ENCODE measurements at regions of chr21 and their contacts with region 1.

Region 1: DNA sequence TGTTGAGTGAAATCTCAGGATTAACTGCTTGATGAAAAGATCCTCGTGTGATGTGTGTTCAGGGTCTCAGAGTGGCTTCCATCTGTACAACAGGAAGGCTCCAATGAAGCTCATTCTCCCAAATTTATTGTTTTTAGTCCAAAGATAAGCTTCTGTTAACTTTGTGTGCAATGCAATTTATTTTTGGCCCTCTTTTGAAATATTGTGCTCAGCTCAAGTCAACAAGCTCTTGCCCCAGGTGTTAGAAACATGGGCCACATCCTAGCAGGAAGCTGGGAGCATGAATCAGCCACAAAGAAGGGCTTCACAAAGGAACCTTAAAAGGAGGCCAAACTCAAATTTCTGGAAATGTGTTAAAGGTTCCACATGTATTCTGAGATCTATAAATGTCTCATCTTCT is 135.7 kb downstream of the PCP4 start:
- DNase-seq: no peak
- H3K4me3 ChIP-seq: no peak overlapping the region
- H3K27ac ChIP-seq: no peak overlapping the region
- H3K4me1 ChIP-seq: no peaks in the 10 kb centered on the region
- H3K27me3 ChIP-seq: no peaks in the 10 kb centered on the region
- CTCF ChIP-seq: no peak

Region 2: DNA sequence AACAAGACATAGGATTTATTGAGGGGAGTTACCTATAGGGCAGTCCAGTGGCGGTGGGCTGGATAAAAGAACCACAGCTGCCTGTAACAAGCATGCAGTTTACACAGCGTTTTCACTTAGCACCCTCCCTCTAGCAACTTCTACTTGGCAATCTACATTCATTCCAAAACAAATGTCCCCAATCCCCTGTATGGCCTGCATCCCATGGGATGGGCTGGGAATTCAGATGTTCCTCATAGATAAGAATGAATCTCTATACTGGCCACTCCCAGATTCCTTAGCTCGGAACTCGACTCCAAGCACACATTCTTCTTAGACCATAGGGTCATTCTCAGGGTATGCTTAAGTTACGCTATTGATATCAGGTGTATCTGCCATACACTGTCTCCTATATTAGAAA is 102.5 kb before region 1 on chr21:
- CTCF ChIA-PET with region 1: no interaction called
- POLR2A ChIA-PET with region 1: no interaction called
- intact Hi-C with region 1: no loop called
- DNase-seq: no peak
- H3K4me3 ChIP-seq: no peak overlapping the region
- H3K27ac ChIP-seq: no peak overlapping the region
- H3K4me1 ChIP-seq: no peaks in the 10 kb centered on the region
- H3K27me3 ChIP-seq: peaks cover 10% of the 10 kb centered on the region
- CTCF ChIP-seq: no peak

Region 3: DNA sequence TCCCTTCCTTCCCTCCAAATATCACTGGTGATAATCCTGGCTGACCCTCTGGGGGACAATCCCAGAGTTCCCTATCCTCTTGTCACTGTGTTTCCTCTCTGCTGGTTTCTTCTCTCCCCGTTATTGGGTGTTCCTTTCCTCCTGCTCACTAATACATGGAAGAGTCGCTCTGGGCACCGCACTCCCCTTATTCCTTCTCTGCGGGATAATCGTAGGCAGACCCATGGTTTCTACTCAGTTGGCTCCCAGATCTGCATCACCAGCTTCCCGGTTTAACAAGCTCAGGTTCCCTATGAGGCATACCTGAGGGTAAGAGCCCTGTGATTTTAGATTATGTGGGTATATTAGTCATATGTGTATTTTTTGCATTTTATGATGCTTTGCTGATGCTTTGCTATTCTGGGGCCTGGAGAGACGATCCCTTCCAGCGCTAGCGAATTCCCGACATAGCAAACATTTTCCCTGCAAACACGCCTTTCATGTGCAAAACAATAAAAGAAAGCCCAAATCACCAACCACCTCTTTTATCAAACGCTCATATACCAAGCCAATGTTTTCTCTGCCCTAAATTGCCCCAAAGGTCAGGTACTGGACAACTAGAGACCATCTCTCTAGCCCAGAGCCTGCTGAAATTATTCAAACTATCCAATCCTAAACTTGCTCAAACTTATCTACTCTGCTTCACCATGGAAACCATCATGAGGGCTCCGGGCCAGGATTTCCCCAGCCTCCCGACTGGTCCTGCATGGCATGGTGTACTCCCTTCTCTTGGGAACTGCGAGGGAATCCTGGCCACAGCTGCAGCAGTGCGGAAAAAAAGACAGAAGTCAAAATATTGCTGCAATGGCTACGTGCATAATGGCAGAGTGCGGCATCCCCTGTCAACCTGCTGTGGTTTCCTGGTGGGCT is 51.5 kb before region 1 on chr21:
- CTCF ChIA-PET with region 1: no interaction called
- POLR2A ChIA-PET with region 1: no interaction called
- intact Hi-C with region 1: loop called (anchors 10 kb)
- DNase-seq: no peak
- H3K4me3 ChIP-seq: no peak overlapping the region
- H3K27ac ChIP-seq: no peak overlapping the region
- H3K4me1 ChIP-seq: no peaks in the 10 kb centered on the region
- H3K27me3 ChIP-seq: no peaks in the 10 kb centered on the region
- CTCF ChIP-seq: no peak

Region 4: GRCh38 chr21:40338755-40339429 is 335.9 kb after region 1 on chr21:
- CTCF ChIA-PET with region 1: no interaction called
- POLR2A ChIA-PET with region 1: no interaction called
- intact Hi-C with region 1: no loop called
- DNase-seq: no peak
- H3K4me3 ChIP-seq: no peak overlapping the region
- H3K27ac ChIP-seq: no peak overlapping the region
- H3K4me1 ChIP-seq: no peaks in the 10 kb centered on the region
- H3K27me3 ChIP-seq: peaks cover 5% of the 10 kb centered on the region
- CTCF ChIP-seq: no peak